ENCODE measurements at regions of chr20 and their contacts with region 1.

Region 1: GRCh38 chr20:44966030-44966961 is at the start of gene STK4:
- DNase-seq: peak; percentile 97
- ATAC-seq: peak; percentile 71
- H3K4me3 Mint-ChIP-seq: peak within 1 kb of the TSS; percentile 94
- H3K27ac Mint-ChIP-seq: peak within 1 kb of the TSS; percentile 98
- H3K4me1 Mint-ChIP-seq: peaks cover 55% of the 10 kb centered on the region
- H3K27me3 Mint-ChIP-seq: no peaks in the 10 kb centered on the region
- total RNA-seq, gene STK4: 156 to 164 TPM

Region 2: DNA sequence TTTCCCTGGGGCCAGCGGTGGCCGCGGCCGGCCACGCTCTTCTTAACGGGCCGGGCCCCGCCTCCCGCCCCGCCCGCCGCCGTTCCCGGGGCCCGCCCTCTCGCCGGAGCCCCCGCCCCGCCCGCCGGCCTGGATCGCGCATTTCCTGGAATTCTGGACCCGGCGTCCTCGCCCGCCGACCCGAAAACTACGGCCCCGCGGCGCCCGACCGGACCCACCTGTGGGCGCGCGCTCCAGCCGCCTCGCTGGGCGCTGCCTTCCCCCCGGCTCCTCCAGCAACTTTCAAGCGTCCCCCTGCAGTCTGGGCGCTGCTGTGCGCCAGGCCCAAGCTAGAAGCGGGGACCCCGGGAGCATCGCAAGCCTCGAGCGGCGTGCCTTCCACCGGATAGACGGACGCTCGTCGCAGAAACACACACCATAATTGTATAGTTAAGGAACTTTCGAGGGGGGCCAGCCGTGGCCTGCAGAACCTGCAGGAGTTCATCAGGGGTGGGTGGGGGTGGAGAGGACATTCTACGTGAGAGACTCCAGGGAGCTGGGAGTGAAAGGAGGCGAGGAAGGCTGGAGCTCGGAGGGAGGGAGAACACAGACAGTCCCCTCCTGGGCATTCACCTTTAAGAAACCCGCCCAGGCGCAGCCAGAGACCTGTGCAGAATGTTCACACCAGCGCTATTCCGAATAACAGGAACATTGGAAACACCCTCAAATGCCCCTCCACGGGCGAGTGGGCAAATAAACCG is 314.4 kb before region 1 on chr20 and contains the start of gene ADA:
- CTCF ChIA-PET with region 1: no interaction called
- POLR2A ChIA-PET with region 1: no interaction called
- intact Hi-C with region 1: loop called in 1 of 2 experiments (anchors 2 kb)
- DNase-seq: peak; percentile 65
- ATAC-seq: peak; percentile 48
- H3K4me3 Mint-ChIP-seq: peak within 1 kb of the TSS; percentile 78
- H3K27ac Mint-ChIP-seq: peak within 1 kb of the TSS; percentile 89
- H3K4me1 Mint-ChIP-seq: peaks cover 50% of the 10 kb centered on the region
- H3K27me3 Mint-ChIP-seq: no peaks in the 10 kb centered on the region
- total RNA-seq, gene ADA: 33.8 to 37.8 TPM

Region 3: GRCh38 chr20:44979090-44979621 is 12.9 kb after region 1 on chr20:
- CTCF ChIA-PET with region 1: interaction called, 5 read pairs
- POLR2A ChIA-PET with region 1: interaction called, 8 read pairs
- intact Hi-C with region 1: loop called (anchors 1 kb)
- DNase-seq: peak; percentile 74
- ATAC-seq: peak; percentile 75
- H3K4me3 Mint-ChIP-seq: peak overlapping the region; percentile 10
- H3K27ac Mint-ChIP-seq: peak overlapping the region; percentile 95
- H3K4me1 Mint-ChIP-seq: peaks cover 90% of the 10 kb centered on the region
- H3K27me3 Mint-ChIP-seq: no peaks in the 10 kb centered on the region

Region 4: DNA sequence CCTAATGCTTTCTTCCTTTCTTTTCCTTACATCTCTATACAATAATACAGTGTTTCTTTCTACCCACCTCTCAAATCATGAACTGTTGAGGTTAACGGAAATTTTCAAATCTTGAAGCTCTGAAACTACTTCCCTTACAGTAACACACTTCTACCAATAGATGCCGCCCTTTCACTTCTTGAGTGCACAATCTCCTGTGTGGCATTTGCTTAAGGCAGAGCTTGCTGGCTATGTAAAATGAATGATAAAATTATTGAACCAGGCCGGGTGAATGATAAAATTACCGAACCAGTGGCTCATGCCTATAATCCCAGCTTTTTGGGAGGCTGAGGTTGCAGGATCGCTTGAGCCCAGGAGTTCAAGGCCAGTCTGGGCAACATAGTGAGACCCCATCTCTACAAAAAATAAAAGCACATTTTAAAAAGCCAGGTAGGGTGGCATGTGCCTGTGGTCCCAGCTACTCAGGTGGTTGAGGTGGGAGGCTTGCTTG is 77.8 kb after region 1 on chr20:
- CTCF ChIA-PET with region 1: interaction called, 4 read pairs
- POLR2A ChIA-PET with region 1: interaction called, 6 read pairs
- intact Hi-C with region 1: loop called (anchors 2 to 5 kb)
- DNase-seq: peak; percentile 52
- ATAC-seq: peak; percentile 86
- H3K4me3 Mint-ChIP-seq: no peak overlapping the region
- H3K27ac Mint-ChIP-seq: peak overlapping the region; percentile 93
- H3K4me1 Mint-ChIP-seq: peaks cover 76% of the 10 kb centered on the region
- H3K27me3 Mint-ChIP-seq: no peaks in the 10 kb centered on the region

Region 5: GRCh38 chr20:45752746-45753145 is 786.5 kb after region 1 on chr20:
- CTCF ChIA-PET with region 1: no interaction called
- POLR2A ChIA-PET with region 1: no interaction called
- intact Hi-C with region 1: loop called in 1 of 2 experiments (anchors 5 kb)
- DNase-seq: peak; percentile 51
- ATAC-seq: peak; percentile 76
- H3K4me3 Mint-ChIP-seq: no peak overlapping the region
- H3K27ac Mint-ChIP-seq: peak overlapping the region; percentile 63
- H3K4me1 Mint-ChIP-seq: peaks cover 28% of the 10 kb centered on the region
- H3K27me3 Mint-ChIP-seq: peaks cover 21% of the 10 kb centered on the region

Measured in activated CD4-positive, alpha-beta T cell treated with anti-CD3 and anti-CD28 coated beads for 36 hours (primary cell).